ENCODE measurements at regions of chr13 and their contacts with region 1.

Region 1: GRCh38 chr13:79775830-79776229 is 294.9 kb downstream of the NDFIP2 start:
- DNase-seq: peak; percentile 87
- H3K4me3 ChIP-seq: no peak overlapping the region
- H3K27ac ChIP-seq: no peak overlapping the region
- H3K4me1 ChIP-seq: peaks cover 4% of the 10 kb centered on the region
- H3K27me3 ChIP-seq: no peaks in the 10 kb centered on the region
- CTCF ChIP-seq: peak; percentile 65 to 67
- POLR2A ChIP-seq: no peak

Region 2: GRCh38 chr13:79973533-79973963 is 197.7 kb after region 1 on chr13:
- CTCF ChIA-PET with region 1: no interaction called
- POLR2A ChIA-PET with region 1: no interaction called
- dilution Hi-C with region 1: no loop called
- intact Hi-C with region 1: loop called (anchors 1 kb)
- DNase-seq: no peak
- H3K4me3 ChIP-seq: no peak overlapping the region
- H3K27ac ChIP-seq: no peak overlapping the region
- H3K4me1 ChIP-seq: no peaks in the 10 kb centered on the region
- H3K27me3 ChIP-seq: no peaks in the 10 kb centered on the region
- CTCF ChIP-seq: peak; percentile 36
- POLR2A ChIP-seq: no peak

Region 3: DNA sequence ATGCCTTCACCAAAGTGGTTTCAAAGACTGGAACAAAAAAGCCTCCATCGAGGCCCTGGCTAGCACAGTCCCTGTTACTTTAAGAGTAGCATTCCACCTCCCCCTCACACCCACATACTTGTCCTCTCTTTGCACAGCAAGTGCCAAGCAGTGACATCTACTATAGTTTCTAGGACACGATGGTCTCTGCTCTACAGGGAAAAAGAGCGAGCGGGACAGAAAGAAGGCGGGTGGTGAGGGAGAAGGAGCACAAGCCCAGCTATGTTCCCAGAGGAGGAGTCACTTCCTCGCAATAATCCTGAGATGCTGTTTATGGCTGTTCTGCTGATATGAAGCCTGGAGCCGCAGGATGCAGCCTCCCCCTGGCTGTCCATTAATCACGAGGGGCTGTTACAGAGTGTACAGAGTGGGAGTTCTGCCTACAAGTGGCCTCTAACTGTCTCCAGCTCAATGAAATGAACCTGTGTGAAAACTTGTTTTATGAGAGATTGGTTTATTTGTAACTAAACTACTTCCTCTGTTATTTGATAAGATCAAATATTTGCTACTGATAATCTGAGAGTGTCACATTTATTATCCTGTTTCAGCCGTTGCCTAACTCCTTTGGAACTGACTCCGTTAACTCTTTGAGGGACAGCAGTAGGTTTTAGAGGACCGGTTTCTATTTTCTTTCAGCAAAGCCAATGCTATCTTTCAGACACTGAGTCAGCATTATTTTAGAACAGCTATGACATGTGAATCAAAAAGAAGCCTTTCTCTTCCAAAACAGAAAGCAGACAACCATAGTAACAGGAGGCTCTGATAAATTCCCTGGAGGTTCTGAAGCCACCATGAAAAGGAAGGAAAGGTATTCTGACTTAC is 357.1 kb after region 1 on chr13:
- CTCF ChIA-PET with region 1: no interaction called
- POLR2A ChIA-PET with region 1: no interaction called
- dilution Hi-C with region 1: no loop called
- intact Hi-C with region 1: loop called (anchors 5 kb)
- DNase-seq: peak; percentile 84
- H3K4me3 ChIP-seq: peak overlapping the region in 1 of 3 experiments; percentile 21
- H3K27ac ChIP-seq: peak overlapping the region; percentile 32
- H3K4me1 ChIP-seq: peaks cover 23% of the 10 kb centered on the region
- H3K27me3 ChIP-seq: no peaks in the 10 kb centered on the region
- CTCF ChIP-seq: no peak
- POLR2A ChIP-seq: no peak

Region 4: GRCh38 chr13:80363890-80364503 is 588.2 kb after region 1 on chr13:
- CTCF ChIA-PET with region 1: interaction called, 5 read pairs
- POLR2A ChIA-PET with region 1: no interaction called
- dilution Hi-C with region 1: no loop called
- intact Hi-C with region 1: loop called (anchors 1 kb)
- DNase-seq: peak; percentile 46
- H3K4me3 ChIP-seq: peak overlapping the region in 1 of 3 experiments; percentile 34
- H3K27ac ChIP-seq: no peak overlapping the region
- H3K4me1 ChIP-seq: peaks cover 5% of the 10 kb centered on the region
- H3K27me3 ChIP-seq: no peaks in the 10 kb centered on the region
- CTCF ChIP-seq: peak; percentile 62 to 65
- POLR2A ChIP-seq: no peak

Region 5: GRCh38 chr13:81017513-81018152 is 1241.8 kb after region 1 on chr13:
- CTCF ChIA-PET with region 1: no interaction called
- POLR2A ChIA-PET with region 1: no interaction called
- dilution Hi-C with region 1: no loop called
- intact Hi-C with region 1: loop called (anchors 5 kb)
- DNase-seq: peak; percentile 57
- H3K4me3 ChIP-seq: no peak overlapping the region
- H3K27ac ChIP-seq: no peak overlapping the region
- H3K4me1 ChIP-seq: peaks cover 2% of the 10 kb centered on the region
- H3K27me3 ChIP-seq: no peaks in the 10 kb centered on the region
- CTCF ChIP-seq: peak; percentile 19 to 29
- POLR2A ChIP-seq: no peak

Measured in endothelial cell of umbilical vein (primary cell).